ENCODE measurements at regions of chr9 and their contacts with region 1.

Region 1: DNA sequence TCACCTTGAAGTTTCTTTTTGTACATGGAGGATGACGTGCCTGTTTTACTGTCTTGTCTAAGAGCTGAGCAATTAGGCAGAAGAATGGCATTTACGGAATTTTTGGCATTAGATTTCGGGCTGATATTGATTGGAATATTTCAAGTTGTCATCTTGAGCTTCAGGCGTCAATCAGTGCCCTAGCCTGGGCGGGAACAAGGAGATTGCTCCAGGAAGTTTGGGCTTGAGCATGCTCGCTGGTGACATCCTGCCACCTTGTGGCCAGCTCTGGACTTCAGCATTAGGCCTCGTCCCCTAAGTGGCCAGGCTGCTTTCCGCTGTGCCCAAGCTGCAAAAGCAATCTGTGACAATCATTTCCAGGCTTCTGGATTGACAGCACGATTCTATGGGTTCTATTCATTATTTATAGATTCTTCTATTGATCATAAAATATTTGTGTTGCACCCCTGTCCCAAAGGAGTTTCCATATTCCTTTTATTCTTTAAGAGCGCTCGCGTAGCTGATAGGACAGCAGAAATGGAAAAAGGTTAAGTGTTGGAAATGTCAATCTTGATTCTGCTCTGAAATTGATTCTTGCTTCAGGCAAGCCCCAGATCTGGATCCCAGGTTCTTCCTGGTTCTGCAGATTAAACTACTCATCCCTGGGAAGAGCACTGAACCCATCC is 79.3 kb downstream of the SLC28A3 start:
- DNase-seq: peak; percentile 86

Region 2: GRCh38 chr9:83937911-83938323 is 323.3 kb before region 1 on chr9:
- intact Hi-C with region 1: loop called (anchors 1 kb)
- DNase-seq: peak; percentile 29

Region 3: GRCh38 chr9:84244850-84245249 is 16.4 kb before region 1 on chr9:
- intact Hi-C with region 1: no loop called
- DNase-seq: no peak